ENCODE measurements at regions of chr4 and their contacts with region 1.

Region 1: DNA sequence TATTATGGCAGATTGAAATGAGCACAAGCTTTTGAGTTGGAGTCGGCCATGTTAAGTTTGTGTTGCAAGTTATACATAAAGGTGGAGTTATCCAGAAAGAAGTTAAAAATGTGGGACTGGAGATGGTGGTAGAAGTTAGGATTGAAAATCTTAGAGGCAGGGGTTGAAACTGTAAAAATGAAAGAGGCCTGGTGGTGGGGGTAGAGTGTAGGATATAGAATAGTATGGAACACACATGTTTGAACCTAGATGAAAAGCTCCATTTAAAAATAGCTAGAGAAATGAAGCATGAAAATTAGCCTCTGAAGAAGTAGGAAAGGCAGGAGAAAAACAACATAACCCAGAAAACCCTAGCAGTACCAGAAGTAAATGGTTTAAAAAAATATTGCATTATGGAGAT is 131.8 kb upstream of the ENPEP start:
- DNase-seq: peak in 1 of 2 experiments; percentile 50
- H3K4me3 ChIP-seq: no peak overlapping the region
- H3K4me3 Mint-ChIP-seq: no peak overlapping the region
- H3K27ac Mint-ChIP-seq: no peak overlapping the region
- H3K4me1 ChIP-seq: no peaks in the 10 kb centered on the region
- H3K4me1 Mint-ChIP-seq: no peaks in the 10 kb centered on the region
- H3K27me3 ChIP-seq: no peaks in the 10 kb centered on the region
- H3K27me3 Mint-ChIP-seq: peaks cover 10% of the 10 kb centered on the region
- CTCF ChIP-seq: peak; percentile 56

Region 2: DNA sequence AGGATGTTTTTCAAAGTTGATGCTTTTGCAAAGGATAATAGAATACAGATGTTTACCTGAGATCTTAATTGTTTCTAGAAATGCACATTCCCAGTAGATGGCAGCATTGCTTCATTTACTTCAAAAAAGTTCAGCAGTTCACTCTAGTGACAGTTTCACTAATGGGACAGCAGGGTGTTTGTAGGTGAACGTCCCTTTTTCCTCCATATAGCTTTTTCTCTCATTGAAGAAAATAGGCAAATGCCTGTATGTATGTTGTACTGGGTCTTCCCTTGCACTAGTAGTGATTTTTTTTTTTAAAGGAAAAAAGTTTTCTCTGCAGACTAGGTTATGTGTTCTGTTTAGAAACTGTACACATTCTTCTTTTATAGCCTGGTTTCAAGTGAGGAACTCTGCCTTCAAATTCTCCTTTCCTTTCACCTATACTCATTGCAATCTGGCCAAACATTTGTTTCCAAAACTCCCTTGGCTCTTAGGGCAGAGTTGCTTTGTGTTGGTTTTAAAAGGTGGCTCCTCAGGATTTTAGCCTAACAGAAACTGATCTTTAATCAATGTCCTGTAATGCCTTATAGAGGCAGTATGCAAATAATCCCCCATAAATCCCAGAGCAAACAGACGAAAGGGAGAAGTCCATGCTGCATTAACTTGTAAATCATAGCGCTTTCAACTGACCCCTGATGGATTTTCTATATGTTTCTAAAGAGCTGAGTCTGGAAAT is 345.1 kb before region 1 on chr4:
- CTCF ChIA-PET with region 1: interaction called, 13 read pairs
- POLR2A ChIA-PET with region 1: no interaction called
- intact Hi-C with region 1: loop called (anchors 1 kb)
- DNase-seq: peak in 1 of 2 experiments; percentile 69
- H3K4me3 ChIP-seq: no peak overlapping the region
- H3K4me3 Mint-ChIP-seq: no peak overlapping the region
- H3K27ac Mint-ChIP-seq: no peak overlapping the region
- H3K4me1 ChIP-seq: peaks cover 6% of the 10 kb centered on the region
- H3K4me1 Mint-ChIP-seq: no peaks in the 10 kb centered on the region
- H3K27me3 ChIP-seq: no peaks in the 10 kb centered on the region
- H3K27me3 Mint-ChIP-seq: peaks cover 2% of the 10 kb centered on the region
- CTCF ChIP-seq: peak; percentile 44 to 73

Region 3: DNA sequence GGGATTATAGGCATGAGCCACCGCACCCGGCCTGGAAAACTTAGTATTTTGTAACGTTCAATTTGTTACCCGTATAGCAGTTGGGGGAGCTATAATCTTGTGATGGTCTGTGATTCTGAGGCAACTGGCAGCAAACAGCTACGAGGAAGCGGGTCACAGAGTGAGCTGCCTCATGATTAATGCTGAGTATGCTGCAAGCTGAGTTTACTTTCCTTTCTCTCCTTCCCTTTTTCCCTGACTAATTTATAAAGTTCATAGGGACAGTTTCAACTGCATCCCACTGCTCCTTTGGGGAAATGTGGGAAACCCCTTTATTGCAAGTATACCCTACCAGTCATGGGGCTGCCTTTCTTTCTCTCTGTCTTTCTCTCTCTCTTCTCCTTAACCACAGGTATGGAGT is 128.0 kb before region 1 on chr4:
- CTCF ChIA-PET with region 1: no interaction called
- POLR2A ChIA-PET with region 1: no interaction called
- intact Hi-C with region 1: no loop called
- DNase-seq: no peak
- H3K4me3 ChIP-seq: no peak overlapping the region
- H3K4me3 Mint-ChIP-seq: no peak overlapping the region
- H3K27ac Mint-ChIP-seq: no peak overlapping the region
- H3K4me1 ChIP-seq: no peaks in the 10 kb centered on the region
- H3K4me1 Mint-ChIP-seq: no peaks in the 10 kb centered on the region
- H3K27me3 ChIP-seq: no peaks in the 10 kb centered on the region
- H3K27me3 Mint-ChIP-seq: no peaks in the 10 kb centered on the region
- CTCF ChIP-seq: no peak

Region 4: GRCh38 chr4:110310795-110311194 is 33.4 kb before region 1 on chr4:
- CTCF ChIA-PET with region 1: interaction called, 13 read pairs
- POLR2A ChIA-PET with region 1: no interaction called
- intact Hi-C with region 1: no loop called
- DNase-seq: no peak
- H3K4me3 ChIP-seq: no peak overlapping the region
- H3K4me3 Mint-ChIP-seq: no peak overlapping the region
- H3K27ac Mint-ChIP-seq: no peak overlapping the region
- H3K4me1 ChIP-seq: no peaks in the 10 kb centered on the region
- H3K4me1 Mint-ChIP-seq: no peaks in the 10 kb centered on the region
- H3K27me3 ChIP-seq: no peaks in the 10 kb centered on the region; the same call in 1 of the 2 replicates
- H3K27me3 Mint-ChIP-seq: peaks cover 8% of the 10 kb centered on the region
- CTCF ChIP-seq: no peak

Region 5: DNA sequence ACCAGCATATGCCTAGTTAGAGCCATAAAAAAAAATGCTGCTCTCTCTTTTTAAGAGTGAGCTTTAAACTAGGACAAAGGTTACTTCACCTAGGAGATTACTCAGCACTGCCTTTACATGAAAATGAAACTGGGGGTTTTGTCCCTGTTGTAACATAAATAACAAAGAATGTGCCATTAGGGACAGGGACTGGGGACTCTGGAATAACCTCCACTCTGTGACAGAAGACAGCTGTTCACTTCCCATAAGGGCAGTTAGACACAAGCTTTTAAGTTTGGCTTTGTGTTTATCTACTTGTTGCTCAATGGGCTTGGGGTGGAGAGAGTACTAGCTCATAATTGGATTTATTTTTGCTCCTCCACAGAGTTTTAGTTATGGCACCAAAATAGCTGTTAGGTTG is 143.7 kb after region 1 on chr4:
- CTCF ChIA-PET with region 1: interaction called, 10 read pairs
- POLR2A ChIA-PET with region 1: no interaction called
- intact Hi-C with region 1: no loop called
- DNase-seq: peak in 1 of 2 experiments; percentile 15
- H3K4me3 ChIP-seq: no peak overlapping the region
- H3K4me3 Mint-ChIP-seq: no peak overlapping the region
- H3K27ac Mint-ChIP-seq: no peak overlapping the region
- H3K4me1 ChIP-seq: peaks cover 9% of the 10 kb centered on the region; the same call in 1 of the 2 replicates
- H3K4me1 Mint-ChIP-seq: peaks cover 12% of the 10 kb centered on the region
- H3K27me3 ChIP-seq: no peaks in the 10 kb centered on the region
- H3K27me3 Mint-ChIP-seq: no peaks in the 10 kb centered on the region
- CTCF ChIP-seq: no peak

Region 6: DNA sequence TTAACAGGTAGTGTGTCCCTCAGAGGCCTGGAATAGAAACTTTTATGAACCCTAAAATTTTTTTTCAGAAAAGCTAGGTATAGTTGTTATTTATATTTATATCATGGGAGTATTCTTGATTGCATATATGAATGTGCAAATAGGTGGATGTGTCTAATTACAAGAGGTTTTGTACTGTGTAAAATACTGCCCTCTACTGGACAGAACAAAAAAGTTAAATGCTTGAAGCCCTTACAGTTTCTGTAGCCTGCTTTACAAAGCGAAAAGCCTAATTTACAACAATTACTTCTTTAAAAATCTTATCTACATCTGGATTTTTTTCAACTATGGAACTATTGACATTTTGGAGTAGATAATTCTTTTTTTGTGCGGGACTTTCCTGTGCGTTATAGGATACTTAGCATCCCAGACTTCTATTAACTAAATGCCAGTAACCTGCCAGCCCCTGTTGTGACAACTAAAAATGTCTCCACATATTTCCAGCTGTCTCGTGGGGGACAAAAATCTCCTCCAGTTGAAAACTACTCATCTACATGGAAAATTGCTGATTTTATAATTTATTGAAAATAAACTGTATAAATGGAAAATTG is 166.9 kb after region 1 on chr4:
- CTCF ChIA-PET with region 1: interaction called, 81 read pairs
- POLR2A ChIA-PET with region 1: no interaction called
- intact Hi-C with region 1: loop called (anchors 1 kb)
- DNase-seq: peak in 1 of 2 experiments; percentile 38
- H3K4me3 ChIP-seq: no peak overlapping the region
- H3K4me3 Mint-ChIP-seq: no peak overlapping the region
- H3K27ac Mint-ChIP-seq: no peak overlapping the region
- H3K4me1 ChIP-seq: no peaks in the 10 kb centered on the region
- H3K4me1 Mint-ChIP-seq: no peaks in the 10 kb centered on the region
- H3K27me3 ChIP-seq: no peaks in the 10 kb centered on the region
- H3K27me3 Mint-ChIP-seq: no peaks in the 10 kb centered on the region
- CTCF ChIP-seq: peak; percentile 56 to 60

Region 7: GRCh38 chr4:110516106-110516922 is 172.2 kb after region 1 on chr4:
- CTCF ChIA-PET with region 1: interaction called, 81 read pairs
- POLR2A ChIA-PET with region 1: no interaction called
- intact Hi-C with region 1: loop called (anchors 1 kb)
- DNase-seq: peak; percentile 78
- H3K4me3 ChIP-seq: no peak overlapping the region
- H3K4me3 Mint-ChIP-seq: peak overlapping the region; percentile 64
- H3K27ac Mint-ChIP-seq: no peak overlapping the region
- H3K4me1 ChIP-seq: no peaks in the 10 kb centered on the region
- H3K4me1 Mint-ChIP-seq: no peaks in the 10 kb centered on the region
- H3K27me3 ChIP-seq: no peaks in the 10 kb centered on the region
- H3K27me3 Mint-ChIP-seq: no peaks in the 10 kb centered on the region
- CTCF ChIP-seq: peak; percentile 78 to 82

Region 8: DNA sequence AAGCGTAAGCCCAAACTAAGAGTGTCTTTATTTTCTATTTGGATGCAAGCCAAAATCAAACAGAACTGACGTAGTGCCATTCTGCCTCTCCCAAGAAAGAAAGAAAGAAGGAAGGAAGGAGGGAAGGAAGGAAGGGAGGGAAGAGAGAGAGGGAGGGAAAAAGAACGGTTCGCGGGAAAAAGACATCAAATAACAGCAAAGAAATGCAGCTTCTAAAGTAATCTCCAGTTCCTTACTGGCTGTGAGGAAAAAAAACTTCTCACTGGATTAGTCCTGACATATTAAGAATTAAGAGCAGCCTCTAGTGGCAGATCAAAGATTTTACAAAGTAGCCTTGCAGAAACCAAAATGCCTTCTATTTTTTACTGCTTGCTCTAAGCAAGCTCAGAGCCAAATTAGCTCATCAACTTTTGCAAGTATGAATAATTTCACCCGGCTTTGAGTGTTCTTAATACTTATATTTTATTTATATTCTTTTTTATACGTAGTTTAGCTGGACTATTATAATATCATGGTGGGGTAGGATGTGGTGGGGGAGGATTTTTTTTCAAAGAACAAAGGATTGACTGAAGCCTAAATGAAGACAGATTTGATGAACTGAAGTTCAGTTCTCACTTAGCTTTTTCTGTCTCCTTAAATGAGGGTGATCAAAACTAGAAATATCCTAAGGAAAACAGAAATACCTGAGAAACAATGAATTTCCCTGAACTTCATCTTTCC is 242.1 kb after region 1 on chr4:
- CTCF ChIA-PET with region 1: no interaction called
- POLR2A ChIA-PET with region 1: no interaction called
- intact Hi-C with region 1: loop called (anchors 5 kb)
- DNase-seq: peak in 1 of 2 experiments; percentile 6
- H3K4me3 ChIP-seq: no peak overlapping the region
- H3K4me3 Mint-ChIP-seq: no peak overlapping the region
- H3K27ac Mint-ChIP-seq: no peak overlapping the region
- H3K4me1 ChIP-seq: no peaks in the 10 kb centered on the region
- H3K4me1 Mint-ChIP-seq: no peaks in the 10 kb centered on the region
- H3K27me3 ChIP-seq: no peaks in the 10 kb centered on the region
- H3K27me3 Mint-ChIP-seq: no peaks in the 10 kb centered on the region
- CTCF ChIP-seq: peak; percentile 40 to 52